GM18951 (cell line): ENCODE measurements at regions of chr1 and their contacts with region 1.

Region 1: GRCh38 chr1:72366473-72366872 is 84.1 kb upstream of the NEGR1 start:
- POLR2A ChIP-seq: no peak

Region 2: DNA sequence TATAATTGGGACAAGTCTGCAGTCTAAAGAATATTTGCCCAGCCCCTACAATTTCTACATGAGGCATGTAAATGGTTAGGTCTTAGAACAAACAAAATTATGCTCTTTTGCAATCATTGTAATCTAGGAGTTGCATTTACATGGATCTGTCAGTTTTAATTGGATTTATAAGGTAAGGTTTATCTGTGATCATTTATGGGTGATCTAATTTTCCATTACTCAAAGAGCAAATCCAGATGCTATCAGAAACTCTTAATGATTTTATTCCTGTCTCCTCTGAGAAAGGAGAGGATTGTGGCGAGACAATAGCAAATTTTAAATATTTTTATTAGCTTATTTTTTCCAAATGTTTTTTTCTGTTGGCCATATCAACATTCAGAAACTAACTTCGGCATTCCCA is 70.0 kb before region 1 on chr1:
- in situ Hi-C with region 1: loop called (anchors 5 kb)
- POLR2A ChIP-seq: no peak

Region 3: DNA sequence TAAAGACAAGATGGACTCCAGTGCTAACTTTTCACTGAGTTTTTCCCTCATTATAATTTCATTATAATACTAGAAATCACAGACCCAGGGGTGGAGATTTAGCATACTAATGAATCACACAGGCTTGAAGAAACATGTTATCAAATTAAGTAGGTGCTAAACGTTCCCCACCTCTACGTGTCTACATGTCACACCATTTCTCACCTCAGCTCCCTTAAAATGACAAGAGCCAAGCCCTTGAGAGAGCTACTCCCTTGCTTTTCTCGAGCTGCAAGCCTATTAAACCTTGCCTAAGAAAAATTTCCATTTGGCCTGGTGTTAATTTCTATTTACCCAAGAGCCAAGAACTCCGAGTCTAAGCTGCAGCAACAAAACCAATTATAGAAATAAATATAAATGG is 312.2 kb after region 1 on chr1:
- in situ Hi-C with region 1: no loop called
- POLR2A ChIP-seq: no peak